AG04450 (cell line): ENCODE measurements at regions of chr19 and their contacts with region 1.

Region 1: DNA sequence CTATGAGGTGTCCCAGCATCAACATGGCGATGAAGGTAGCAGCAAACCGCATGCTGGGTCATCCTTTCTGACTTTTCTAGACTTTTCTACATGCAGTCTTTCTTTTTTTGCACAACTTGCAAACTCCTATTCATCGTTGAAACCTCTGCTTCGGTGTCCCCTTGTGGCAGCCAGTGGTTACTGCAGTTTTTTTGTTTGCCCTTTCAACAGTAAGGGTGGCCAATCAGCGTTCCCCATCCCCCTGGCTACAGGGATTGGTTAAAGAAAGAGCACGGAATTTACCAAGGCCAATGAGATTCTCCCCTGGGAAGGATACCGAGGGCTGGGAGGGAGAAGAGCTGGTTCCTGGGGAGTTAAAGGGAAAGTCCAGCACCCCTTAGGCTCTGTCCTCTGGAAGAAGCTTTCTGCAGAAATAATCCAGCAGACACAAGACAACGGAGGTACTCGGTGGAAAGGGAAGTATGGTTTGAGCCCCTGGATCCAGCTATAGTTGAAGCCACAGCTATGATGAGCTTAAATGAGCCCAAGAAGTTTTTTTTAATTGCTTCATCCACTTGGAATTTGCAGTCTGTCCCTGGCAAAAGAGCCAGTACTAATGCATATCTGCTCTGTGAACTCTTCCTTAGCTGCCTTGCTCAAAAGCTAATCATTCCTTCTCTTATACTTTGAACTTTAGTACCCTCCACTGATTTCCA is 5.6 kb upstream of the LSM4 start:
- DNase-seq: peak; percentile 95
- H3K4me3 ChIP-seq: peak overlapping the region; percentile 55
- H3K27ac ChIP-seq: peak overlapping the region; percentile 77
- H3K27me3 ChIP-seq: no peaks in the 10 kb centered on the region
- CTCF ChIP-seq: peak; percentile 96

Region 2: GRCh38 chr19:18251587-18252369 is 76.7 kb before region 1 on chr19:
- CTCF ChIA-PET with region 1: interaction called, 13 read pairs
- POLR2A ChIA-PET with region 1: no interaction called
- DNase-seq: peak; percentile 20
- H3K4me3 ChIP-seq: no peak overlapping the region
- H3K27ac ChIP-seq: no peak overlapping the region
- H3K27me3 ChIP-seq: peaks cover 21% of the 10 kb centered on the region
- CTCF ChIP-seq: peak; percentile 92

Region 3: GRCh38 chr19:18297308-18297707 is 31.2 kb before region 1 on chr19:
- CTCF ChIA-PET with region 1: interaction called, 10 read pairs
- POLR2A ChIA-PET with region 1: interaction called, 4 read pairs
- DNase-seq: no peak
- H3K4me3 ChIP-seq: no peak overlapping the region
- H3K27ac ChIP-seq: no peak overlapping the region
- H3K27me3 ChIP-seq: no peaks in the 10 kb centered on the region
- CTCF ChIP-seq: no peak

Region 4: DNA sequence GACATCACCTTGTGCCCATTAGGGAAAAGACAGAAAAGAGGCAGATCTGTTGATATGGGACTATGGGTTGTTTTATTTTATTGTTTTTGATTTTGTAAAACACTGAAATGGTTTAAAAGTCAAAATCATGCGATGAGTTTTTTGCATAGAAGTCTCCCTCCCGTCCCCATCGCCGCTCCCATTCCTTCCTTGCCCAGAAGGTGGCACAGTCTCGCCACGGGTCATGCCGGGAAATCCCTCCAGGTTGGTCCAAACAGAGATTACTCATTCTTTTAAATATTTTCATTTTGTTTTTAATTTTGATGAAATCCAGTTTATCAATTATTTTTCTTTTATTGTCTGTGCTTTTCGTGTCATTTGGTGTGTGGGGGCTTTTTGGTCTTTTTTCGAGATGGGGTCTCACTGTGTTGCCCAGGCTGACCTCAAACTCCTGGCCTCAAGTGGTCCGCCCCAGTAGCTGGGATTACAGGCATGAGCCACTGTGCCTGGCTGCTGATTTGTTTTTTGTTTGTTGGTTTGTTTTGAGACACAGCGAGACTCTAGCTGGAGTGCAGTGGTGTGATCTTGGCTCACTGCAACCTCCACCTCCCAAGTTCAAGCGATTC is 21.1 kb after region 1 on chr19:
- CTCF ChIA-PET with region 1: interaction called, 15 read pairs
- POLR2A ChIA-PET with region 1: no interaction called
- DNase-seq: no peak
- H3K4me3 ChIP-seq: no peak overlapping the region
- H3K27ac ChIP-seq: no peak overlapping the region
- H3K27me3 ChIP-seq: no peaks in the 10 kb centered on the region
- CTCF ChIP-seq: peak; percentile 86

Region 5: GRCh38 chr19:18419195-18419698 is 90.8 kb after region 1 on chr19 and contains the start of gene SSBP4:
- CTCF ChIA-PET with region 1: interaction called, 40 read pairs
- POLR2A ChIA-PET with region 1: interaction called, 8 read pairs
- DNase-seq: no peak
- H3K4me3 ChIP-seq: peak within 1 kb of the TSS; percentile 71
- H3K27ac ChIP-seq: peak within 1 kb of the TSS; percentile 47
- H3K27me3 ChIP-seq: no peaks in the 10 kb centered on the region
- CTCF ChIP-seq: 0 out of 2 replicates have a peak, but pooled peaks have one; percentile 18
- polyA plus RNA-seq, gene SSBP4: 9.4 and 12.6 TPM in 2 replicates